ENCODE measurements at regions of chrX and their contacts with region 1.

Region 1: DNA sequence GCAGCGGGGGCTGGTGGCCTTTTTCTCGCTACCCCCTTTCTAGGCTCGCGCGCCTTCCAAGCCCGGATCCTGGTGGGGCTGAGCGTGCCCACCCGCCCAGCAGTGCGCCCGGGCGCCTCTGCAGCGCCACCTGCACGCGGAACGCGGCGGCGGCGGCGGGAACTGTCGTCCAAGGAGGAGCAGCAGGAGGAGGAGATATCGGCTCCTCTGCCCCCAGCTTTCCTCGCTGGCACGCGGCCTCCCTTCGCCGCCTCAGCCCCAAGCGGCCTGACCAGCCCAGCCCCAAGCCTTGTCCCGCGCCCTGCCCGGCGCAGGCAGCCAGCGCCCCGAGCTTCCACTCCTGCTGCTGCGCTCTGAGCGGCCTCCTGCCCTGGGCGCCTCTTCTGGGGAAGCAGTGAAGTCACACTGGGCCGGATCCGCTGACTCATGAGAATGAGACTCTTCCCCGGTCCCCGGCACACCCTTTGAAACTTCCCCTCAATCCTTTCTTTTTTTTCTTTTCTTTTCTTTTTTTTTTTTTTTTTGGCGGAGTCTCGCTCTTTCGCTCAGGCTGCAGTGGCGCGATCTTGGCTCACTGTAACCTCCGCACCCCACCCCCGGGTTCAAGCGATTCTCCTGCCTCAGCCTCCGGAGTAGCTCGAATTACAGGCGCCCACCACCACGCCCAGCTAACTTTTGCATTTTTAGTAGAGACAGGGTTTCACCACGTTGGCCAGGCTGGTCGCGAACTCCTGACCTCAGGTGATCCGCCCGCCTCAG is 10.6 kb upstream of the ELF4 start:
- DNase-seq: peak; percentile 56
- H3K4me3 Mint-ChIP-seq: peak overlapping the region; percentile 56
- H3K27ac Mint-ChIP-seq: peak overlapping the region; percentile 55
- H3K4me1 Mint-ChIP-seq: peaks cover 21% of the 10 kb centered on the region
- H3K27me3 Mint-ChIP-seq: no peaks in the 10 kb centered on the region

Region 2: GRCh38 chrX:130091958-130092522 is 28.9 kb before region 1 on chrX:
- intact Hi-C with region 1: loop called (anchors 2 kb)
- DNase-seq: peak; percentile 79
- H3K4me3 Mint-ChIP-seq: peak overlapping the region; percentile 83
- H3K27ac Mint-ChIP-seq: peak overlapping the region; percentile 94
- H3K4me1 Mint-ChIP-seq: peaks cover 29% of the 10 kb centered on the region
- H3K27me3 Mint-ChIP-seq: no peaks in the 10 kb centered on the region

Region 3: DNA sequence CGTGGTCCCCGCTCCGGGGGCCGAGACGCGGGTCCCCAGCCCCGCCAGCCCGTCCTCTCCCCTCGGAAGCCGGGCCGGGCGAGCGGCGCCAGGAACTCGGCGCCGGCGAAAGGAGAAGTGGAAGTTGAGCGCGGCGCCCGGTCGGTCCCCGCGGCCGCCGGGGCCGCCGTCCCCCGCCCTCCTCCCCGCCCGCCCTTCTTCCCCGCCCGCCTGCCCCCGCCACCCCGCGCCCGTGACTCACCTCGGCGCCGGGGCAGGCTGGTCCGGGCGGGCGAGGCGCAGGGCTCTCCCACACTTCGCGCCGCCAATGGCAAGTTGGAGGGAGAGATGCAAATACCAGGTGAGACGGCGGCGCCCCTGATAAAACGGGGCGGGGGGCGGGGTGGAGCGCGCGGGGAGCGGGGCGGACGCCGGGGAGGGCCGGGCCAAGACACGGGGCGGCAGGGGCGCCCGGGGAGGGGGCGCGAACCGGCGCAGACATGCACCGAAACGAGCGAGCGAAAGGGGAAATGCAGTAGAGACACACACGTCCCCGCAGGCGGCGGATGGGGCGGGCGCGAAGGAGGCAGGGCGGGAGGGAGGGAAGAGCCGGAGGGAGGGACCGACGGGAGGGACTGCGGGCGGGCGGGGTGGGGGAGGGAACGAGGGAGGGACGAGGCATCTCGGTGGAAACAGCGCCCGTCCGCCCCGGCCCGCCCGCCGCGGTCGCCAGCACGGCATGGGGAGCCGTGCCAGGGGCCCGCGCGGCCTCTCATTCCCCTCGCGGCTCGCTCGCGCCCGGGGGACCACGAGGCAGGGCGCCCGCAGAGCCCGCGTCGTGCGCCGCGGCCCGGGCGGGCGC is 10.3 kb before region 1 on chrX and contains the start of gene ELF4:
- intact Hi-C with region 1: loop called (anchors 1 kb)
- DNase-seq: peak; percentile 38
- H3K4me3 Mint-ChIP-seq: peak within 1 kb of the TSS; percentile 93
- H3K27ac Mint-ChIP-seq: peak within 1 kb of the TSS; percentile 92
- H3K4me1 Mint-ChIP-seq: peaks cover 21% of the 10 kb centered on the region
- H3K27me3 Mint-ChIP-seq: no peaks in the 10 kb centered on the region
- total RNA-seq, gene ELF4: 26.1 and 26.6 TPM in 2 replicates

Region 4: GRCh38 chrX:130155564-130155963 is 34.6 kb after region 1 on chrX:
- intact Hi-C with region 1: no loop called
- DNase-seq: no peak
- H3K4me3 Mint-ChIP-seq: no peak overlapping the region
- H3K27ac Mint-ChIP-seq: no peak overlapping the region
- H3K4me1 Mint-ChIP-seq: peaks cover 11% of the 10 kb centered on the region
- H3K27me3 Mint-ChIP-seq: no peaks in the 10 kb centered on the region

Region 5: DNA sequence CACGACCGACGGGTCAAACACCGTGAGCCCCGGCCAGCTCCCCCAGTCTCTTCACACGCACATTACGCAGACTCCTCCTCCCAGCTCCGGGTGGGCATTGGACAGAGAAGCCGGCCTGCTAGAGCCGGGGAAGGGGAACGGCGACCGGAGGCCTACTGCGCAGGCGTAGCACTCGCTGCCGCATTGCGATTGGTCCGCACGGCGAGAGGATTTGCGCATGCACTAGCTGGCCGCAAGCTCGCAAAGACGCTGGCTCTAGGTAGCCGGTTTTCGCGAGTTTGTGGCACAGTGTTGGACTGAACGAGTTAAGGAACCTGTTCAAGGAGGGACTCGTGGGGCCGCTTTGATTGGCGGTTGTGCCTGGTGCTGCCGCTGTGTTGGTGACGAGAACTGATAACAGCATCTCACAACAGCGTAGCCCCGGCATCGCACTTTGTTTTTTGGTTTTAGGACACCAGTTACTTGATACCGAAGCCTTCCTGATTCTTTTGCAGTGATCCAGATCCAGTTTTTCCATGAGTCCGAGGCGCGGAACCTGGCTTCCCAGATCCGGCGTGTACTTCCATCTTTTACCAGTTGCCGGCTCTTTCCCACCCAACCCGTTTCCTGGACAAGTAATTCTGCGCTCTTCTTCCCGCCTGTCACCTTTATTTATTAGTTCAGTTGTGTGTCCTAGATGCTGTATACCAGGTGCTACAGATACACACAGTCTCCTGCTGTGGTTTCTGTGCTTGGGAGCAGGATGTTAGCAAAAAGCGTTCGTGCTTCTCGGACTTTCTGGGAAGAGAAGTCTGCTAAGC is 45.0 kb after region 1 on chrX and contains the start of gene AIFM1:
- intact Hi-C with region 1: loop called (anchors 2 kb)
- DNase-seq: peak; percentile 86
- H3K4me3 Mint-ChIP-seq: peak within 1 kb of the TSS; percentile 95
- H3K27ac Mint-ChIP-seq: peak within 1 kb of the TSS; percentile 98
- H3K4me1 Mint-ChIP-seq: peaks cover 20% of the 10 kb centered on the region
- H3K27me3 Mint-ChIP-seq: no peaks in the 10 kb centered on the region
- total RNA-seq, gene AIFM1: 46.0 and 50.2 TPM in 2 replicates

Region 6: DNA sequence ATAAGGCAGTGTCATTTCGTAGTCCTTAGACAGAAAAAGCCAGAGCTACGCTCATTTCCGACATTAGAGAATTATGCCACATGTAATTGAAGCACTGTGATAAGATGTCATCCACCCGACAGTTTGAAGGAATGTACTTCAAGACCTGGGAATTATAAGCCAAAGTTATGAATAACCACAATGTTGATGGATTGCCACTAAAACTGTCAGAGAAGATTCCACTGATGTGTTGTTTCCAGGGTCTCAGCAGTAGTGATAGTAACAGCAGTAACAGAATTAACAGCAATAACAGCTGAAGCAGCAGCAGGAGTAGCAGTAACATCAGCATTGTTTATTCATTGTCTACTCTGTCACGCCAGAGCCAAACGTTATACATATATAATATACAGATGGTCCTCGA is 75.5 kb after region 1 on chrX:
- intact Hi-C with region 1: loop called (anchors 1 kb)
- DNase-seq: no peak
- H3K4me3 Mint-ChIP-seq: no peak overlapping the region
- H3K27ac Mint-ChIP-seq: no peak overlapping the region
- H3K4me1 Mint-ChIP-seq: peaks cover 4% of the 10 kb centered on the region
- H3K27me3 Mint-ChIP-seq: peaks cover 2% of the 10 kb centered on the region